ENCODE measurements at regions of chr2 and their contacts with region 1.

Region 1: GRCh38 chr2:46847235-46848068 is 68.2 kb downstream of the MCFD2 start:
- DNase-seq: peak; percentile 87
- H3K4me3 ChIP-seq: peak overlapping the region; percentile 29
- H3K27ac ChIP-seq: peak overlapping the region; percentile 99
- H3K27me3 ChIP-seq: no peaks in the 10 kb centered on the region
- CTCF ChIP-seq: peak; percentile 18

Region 2: DNA sequence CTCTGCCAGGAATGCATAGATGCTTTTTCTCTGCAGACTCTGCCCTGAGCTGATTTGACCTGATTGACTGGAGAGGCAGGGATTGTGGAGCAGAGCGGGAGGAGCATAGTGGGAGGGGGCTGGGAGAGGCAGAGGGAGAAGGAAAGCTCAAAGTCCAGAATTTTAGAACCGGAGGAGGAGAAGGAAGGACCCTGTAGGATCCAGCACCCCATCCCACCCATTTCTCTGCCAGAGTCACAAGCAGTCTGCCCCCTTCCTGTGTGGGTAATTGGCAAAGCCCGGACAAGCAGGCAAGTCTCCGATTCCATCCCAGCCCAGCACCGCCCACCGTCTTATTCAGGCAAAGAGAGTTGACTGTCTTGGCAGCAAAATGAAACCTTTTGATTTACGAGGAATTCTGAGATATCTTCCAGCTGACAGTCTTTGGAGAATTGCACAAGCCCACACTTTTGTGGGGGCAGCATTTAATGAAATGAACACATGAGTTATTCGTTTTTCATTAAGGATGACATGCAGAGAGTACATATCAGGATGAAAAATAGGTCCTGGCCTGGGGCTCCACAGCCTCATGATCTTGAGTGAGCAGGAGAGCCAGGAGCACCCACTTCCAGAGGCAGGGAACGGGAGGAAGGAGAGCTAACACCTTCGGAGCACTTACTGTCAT is 35.0 kb before region 1 on chr2:
- CTCF ChIA-PET with region 1: no interaction called
- POLR2A ChIA-PET with region 1: interaction called, 22 read pairs
- DNase-seq: peak; percentile 95
- H3K4me3 ChIP-seq: peak overlapping the region; percentile 5; the same call in 1 of the 2 replicates
- H3K27ac ChIP-seq: peak overlapping the region; percentile 92
- H3K27me3 ChIP-seq: no peaks in the 10 kb centered on the region
- CTCF ChIP-seq: no peak

Region 3: GRCh38 chr2:46831051-46831868 is 16.2 kb before region 1 on chr2:
- CTCF ChIA-PET with region 1: no interaction called
- POLR2A ChIA-PET with region 1: interaction called, 12 read pairs
- DNase-seq: no peak
- H3K4me3 ChIP-seq: no peak overlapping the region
- H3K27ac ChIP-seq: peak overlapping the region; percentile 58
- H3K27me3 ChIP-seq: no peaks in the 10 kb centered on the region
- CTCF ChIP-seq: no peak

Region 4: DNA sequence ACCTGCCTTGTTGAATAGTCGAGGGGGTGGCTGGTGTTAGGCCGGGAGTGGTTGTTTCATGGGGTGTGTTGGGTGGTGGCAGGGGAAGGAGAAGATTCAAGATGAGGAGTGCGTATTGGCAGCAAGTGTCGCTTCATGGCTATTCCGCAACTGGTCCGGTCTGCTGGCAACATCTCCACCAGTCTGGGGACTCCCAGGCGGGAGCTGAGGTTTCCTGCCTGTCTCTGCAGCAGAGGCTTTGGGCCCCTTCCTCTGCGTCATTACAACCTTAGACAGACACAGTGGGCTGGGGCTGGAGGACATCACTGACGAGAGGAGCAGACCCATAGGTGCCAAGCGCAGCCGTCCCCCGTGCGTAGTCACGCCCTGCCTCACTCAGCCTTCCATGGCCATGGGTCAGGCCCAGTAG is 132.1 kb after region 1 on chr2:
- CTCF ChIA-PET with region 1: no interaction called
- POLR2A ChIA-PET with region 1: no interaction called
- DNase-seq: no peak
- H3K4me3 ChIP-seq: no peak overlapping the region
- H3K27ac ChIP-seq: no peak overlapping the region
- H3K27me3 ChIP-seq: no peaks in the 10 kb centered on the region
- CTCF ChIP-seq: no peak